Thyroid gland (tissue), 4 donors: ENCODE measurements at regions of chr11 and their contacts with region 1.

Region 1: DNA sequence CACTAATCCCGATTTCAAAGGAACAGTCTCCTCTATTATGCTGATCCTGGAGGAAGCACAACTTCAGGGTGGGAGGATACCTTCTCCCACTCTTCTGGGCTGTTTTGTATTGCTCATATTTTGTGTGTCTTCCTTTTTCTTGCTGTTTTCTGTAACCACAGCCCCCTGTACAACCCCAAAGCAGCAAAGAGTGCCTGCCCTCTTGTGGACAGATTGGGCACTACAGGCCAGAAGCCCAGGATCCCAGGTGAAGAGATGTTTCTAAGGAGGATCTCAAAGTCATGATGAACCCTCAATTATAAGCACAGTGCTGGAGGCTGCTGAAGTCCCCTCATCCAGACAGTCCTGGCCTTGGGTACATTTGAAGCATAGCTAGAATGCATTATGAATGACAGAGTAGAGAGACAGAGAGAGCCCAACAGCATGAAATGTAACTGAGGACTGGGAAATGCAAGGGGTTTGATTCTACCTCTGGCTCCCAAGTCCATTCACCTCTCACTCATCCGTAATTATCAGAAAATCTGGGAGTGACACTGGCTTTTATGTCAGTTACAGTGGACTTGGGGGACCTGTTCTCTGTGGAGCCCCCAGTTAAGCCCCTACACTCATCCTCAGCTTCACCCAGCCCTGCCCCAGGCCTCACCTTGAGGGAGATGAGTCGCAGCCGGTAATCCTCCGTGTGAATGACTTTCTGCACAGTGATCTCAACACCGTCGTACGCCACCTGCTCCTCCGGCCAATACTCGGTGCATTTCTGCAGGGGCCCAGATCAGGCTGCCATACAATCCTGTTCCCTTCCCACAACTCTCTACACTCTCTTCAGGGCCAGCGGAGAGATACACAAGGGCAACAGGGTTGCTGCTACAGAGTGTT is 6.2 kb upstream of the IGSF22 start:
- DNase-seq: peak; percentile 55 to 64
- H3K4me3 ChIP-seq: no peak overlapping the region
- H3K27ac ChIP-seq: no peak overlapping the region
- H3K4me1 ChIP-seq: no peaks in the 10 kb centered on the region
- H3K27me3 ChIP-seq: no peaks in the 10 kb centered on the region
- CTCF ChIP-seq: peak; percentile 77 to 98 (median 83)
- POLR2A ChIP-seq: no peak

Region 2: DNA sequence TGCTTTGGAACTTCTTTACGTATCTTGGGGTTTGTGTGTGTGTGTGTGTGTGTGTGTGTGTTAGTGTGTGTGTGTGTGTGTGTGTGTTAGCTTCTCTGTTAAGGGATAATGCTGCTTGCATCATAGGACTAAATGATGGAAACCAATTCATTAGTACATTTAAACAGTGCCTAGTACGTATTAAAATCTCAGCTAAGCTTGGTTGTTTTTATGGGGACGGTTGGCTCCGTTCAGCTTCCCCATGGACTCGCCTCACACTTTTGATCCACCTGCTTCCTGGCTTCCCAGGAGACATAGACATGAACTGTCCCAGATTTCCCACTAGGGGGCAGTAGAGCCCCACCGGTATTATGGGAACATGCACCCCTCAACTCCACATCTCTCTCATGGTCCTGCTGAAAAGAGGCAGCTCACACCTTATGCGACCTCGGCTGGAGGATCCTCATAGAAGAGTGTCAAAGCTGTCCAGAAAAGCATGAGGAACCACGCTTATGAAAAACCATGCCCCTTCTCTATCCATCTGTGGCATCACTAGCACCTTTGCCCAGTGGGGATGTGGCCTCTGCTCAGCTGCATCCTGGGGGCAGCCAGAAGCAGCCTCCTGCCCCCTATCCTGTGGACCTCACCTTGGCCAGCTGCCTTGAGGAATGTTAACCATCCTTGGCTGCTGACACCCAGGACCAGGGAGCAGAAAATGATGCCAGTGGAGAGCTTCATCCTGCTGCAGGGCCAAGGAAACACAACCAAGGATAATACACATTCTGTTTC is 616.6 kb before region 1 on chr11:
- intact Hi-C with region 1: loop called (anchors 5 kb)
- DNase-seq: peak; percentile 52 to 61
- H3K4me3 ChIP-seq: no peak overlapping the region
- H3K27ac ChIP-seq: no peak overlapping the region
- H3K4me1 ChIP-seq: no peaks in the 10 kb centered on the region
- H3K27me3 ChIP-seq: no peaks in the 10 kb centered on the region
- CTCF ChIP-seq: peak; percentile 68 to 87 (median 76)
- POLR2A ChIP-seq: no peak

Region 3: DNA sequence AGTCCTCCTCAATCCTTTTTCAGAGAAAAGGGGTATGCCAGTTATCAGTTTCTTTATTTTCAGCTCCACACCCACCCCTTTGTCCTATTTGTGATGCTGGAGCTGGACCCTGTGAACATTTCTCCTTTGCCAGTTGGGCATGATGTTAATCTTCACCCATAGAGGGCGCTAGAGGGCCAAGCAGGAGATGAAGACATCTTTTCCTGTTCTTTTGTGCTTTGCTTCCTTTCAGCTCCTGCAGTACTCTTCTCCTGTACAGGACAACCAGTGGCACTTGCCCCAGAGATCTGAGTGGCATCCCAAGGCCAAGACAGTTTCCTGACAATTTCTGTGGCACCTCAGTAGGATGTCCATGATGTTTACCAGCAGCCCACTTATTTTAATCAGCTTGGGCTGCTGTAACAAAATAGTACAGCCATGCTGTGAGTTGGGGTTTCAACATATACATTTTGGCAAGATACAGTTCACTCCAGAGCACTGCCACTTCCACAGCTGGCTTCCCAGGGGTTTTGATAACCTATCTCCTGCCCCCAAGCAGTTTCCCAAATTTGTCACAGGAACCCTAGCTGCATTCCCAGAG is 488.3 kb before region 1 on chr11:
- intact Hi-C with region 1: loop called (anchors 5 kb)
- DNase-seq: peak; percentile 13 to 27
- H3K4me3 ChIP-seq: no peak overlapping the region
- H3K27ac ChIP-seq: no peak overlapping the region
- H3K4me1 ChIP-seq: no peaks in the 10 kb centered on the region
- H3K27me3 ChIP-seq: no peaks in the 10 kb centered on the region
- CTCF ChIP-seq: peak in 5 of 6 experiments; percentile 30 to 67 (median 51)
- POLR2A ChIP-seq: no peak

Region 4: GRCh38 chr11:19093976-19094375 is 361.8 kb after region 1 on chr11:
- intact Hi-C with region 1: no loop called
- DNase-seq: no peak
- H3K4me3 ChIP-seq: no peak overlapping the region
- H3K27ac ChIP-seq: no peak overlapping the region
- H3K4me1 ChIP-seq: no peaks in the 10 kb centered on the region
- H3K27me3 ChIP-seq: no peaks in the 10 kb centered on the region
- CTCF ChIP-seq: no peak
- POLR2A ChIP-seq: no peak